ENCODE measurements at regions of chr6 and their contacts with region 1.

Region 1: DNA sequence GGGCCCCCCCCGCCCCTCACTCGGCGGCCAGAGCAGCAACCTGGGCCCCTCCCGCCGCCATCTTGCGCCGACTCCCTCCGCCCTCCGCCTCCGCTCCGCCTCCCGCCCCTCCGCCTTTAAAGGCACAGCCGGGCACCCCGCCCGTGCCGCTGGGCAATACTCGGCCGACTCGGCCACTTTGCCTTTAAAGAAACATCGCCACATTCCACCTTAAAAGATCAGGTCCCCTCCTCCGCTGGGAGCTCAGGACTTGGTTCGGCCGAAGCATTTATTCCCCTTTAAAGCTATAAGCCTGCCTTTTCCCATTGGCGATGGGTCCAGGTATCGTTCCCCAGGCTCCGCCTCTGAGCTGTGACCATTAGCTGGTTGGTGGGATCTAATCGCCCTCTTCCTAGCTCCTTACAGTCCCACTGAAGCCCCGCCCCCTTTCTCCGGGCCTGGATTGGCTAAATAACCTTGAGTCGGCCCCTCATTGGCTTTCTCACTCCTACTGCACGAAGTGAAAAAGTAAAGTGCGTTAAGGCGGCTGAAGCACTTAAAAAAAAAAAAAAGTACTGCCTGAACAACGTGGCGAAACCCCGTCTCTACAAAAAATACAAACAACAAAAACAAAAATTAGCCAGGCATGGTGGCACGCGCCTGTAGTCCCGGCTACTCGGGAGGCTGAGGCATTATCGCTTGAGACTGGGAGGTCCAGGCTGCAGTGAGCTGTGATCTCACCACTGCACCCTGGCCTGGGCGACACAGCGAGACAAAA is at the start of gene ZBTB22:
- DNase-seq: peak; percentile 95
- H3K4me3 Mint-ChIP-seq: peak within 1 kb of the TSS; percentile 99
- H3K27ac Mint-ChIP-seq: peak within 1 kb of the TSS; percentile 97
- H3K4me1 Mint-ChIP-seq: peaks cover 52% of the 10 kb centered on the region
- H3K27me3 Mint-ChIP-seq: no peaks in the 10 kb centered on the region
- total RNA-seq, gene ZBTB22: 10.9 and 14.4 TPM in 2 replicates

Region 2: DNA sequence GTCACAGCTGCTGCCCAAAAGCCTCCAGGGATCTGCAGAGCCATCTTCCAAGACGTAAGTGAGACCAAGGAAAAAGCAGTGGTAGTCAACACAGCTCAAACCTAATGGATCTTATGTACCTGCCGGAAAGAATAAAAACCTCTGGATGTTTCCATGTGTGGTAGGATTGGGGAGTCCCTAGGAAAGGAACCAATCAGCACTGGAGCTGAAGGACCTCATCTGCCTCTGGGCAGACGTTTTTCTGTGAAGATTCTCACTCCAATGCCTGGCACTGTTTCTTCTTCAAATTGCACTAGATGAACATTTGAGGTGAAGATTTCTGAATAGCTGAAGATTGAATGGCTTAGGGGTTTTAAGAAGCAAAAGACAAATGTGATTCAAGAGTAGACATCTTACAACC is 554.4 kb before region 1 on chr6 and contains the start of gene HLA-DQB2:
- intact Hi-C with region 1: no loop called
- DNase-seq: no peak
- H3K4me3 Mint-ChIP-seq: no peak within 1 kb of the TSS
- H3K27ac Mint-ChIP-seq: no peak within 1 kb of the TSS
- H3K4me1 Mint-ChIP-seq: no peaks in the 10 kb centered on the region
- H3K27me3 Mint-ChIP-seq: peaks cover 45% of the 10 kb centered on the region
- total RNA-seq, gene HLA-DQB2: 0.25 and 0.30 TPM in 2 replicates

Region 3: DNA sequence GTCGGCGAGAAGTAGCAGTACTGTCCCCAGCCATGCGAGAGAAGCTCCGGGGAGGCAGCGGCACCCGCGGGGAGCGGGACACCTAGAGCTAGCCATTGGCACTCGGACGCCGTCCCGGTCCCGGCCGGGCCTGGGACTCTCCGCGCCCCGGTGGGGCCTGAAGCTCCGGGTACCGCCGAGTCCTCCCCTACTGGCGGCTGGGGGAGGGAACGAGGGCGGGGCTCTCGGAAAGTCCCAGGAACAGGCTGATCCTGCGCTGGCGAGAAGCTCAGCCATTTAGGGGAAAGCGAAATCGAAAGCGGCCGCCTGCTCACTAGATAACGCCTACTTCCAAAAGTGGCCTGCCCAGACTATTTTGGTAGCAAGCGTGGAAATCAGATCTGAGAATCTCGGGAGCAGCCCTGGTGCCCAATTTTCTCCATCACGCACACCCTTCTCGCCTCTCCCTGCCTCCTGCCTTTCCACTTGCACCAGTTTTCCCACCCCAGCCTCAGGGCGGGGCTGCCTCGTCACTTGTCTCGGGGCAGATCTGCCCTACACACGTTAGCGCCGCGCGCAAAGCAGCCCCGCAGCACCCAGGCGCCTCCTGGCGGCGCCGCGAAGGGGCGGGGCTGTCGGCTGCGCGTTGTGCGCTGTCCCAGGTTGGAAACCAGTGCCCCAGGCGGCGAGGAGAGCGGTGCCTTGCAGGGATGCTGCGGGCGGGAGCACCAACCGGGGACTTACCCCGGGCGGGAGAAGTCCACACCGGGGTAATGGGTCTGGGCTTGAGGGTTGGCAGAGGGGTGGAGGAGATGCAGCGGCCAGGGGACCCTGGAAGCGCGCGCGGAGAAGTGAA is 464.1 kb before region 1 on chr6 and contains the starts of genes PSMB9 and TAP1:
- intact Hi-C with region 1: loop called (anchors 10 kb)
- DNase-seq: peak; percentile 93
- H3K4me3 Mint-ChIP-seq: peak within 1 kb of the TSS; percentile 99
- H3K27ac Mint-ChIP-seq: peak within 1 kb of the TSS; percentile 97
- H3K4me1 Mint-ChIP-seq: peaks cover 63% of the 10 kb centered on the region
- H3K27me3 Mint-ChIP-seq: no peaks in the 10 kb centered on the region
- total RNA-seq, gene PSMB9: 262 and 265 TPM in 2 replicates
- total RNA-seq, gene TAP1: 276 and 278 TPM in 2 replicates

Region 4: GRCh38 chr6:33248925-33249731 is 68.7 kb before region 1 on chr6:
- intact Hi-C with region 1: loop called (anchors 2 kb)
- DNase-seq: peak; percentile 97
- H3K4me3 Mint-ChIP-seq: peak overlapping the region; percentile 88
- H3K27ac Mint-ChIP-seq: peak overlapping the region; percentile 92
- H3K4me1 Mint-ChIP-seq: peaks cover 32% of the 10 kb centered on the region
- H3K27me3 Mint-ChIP-seq: no peaks in the 10 kb centered on the region

Region 5: GRCh38 chr6:33276864-33277662 is 40.8 kb before region 1 on chr6 and contains the start of gene B3GALT4:
- intact Hi-C with region 1: loop called (anchors 1 kb)
- DNase-seq: peak; percentile 73
- H3K4me3 Mint-ChIP-seq: peak within 1 kb of the TSS; percentile 98
- H3K27ac Mint-ChIP-seq: peak within 1 kb of the TSS; percentile 89
- H3K4me1 Mint-ChIP-seq: peaks cover 35% of the 10 kb centered on the region
- H3K27me3 Mint-ChIP-seq: no peaks in the 10 kb centered on the region
- total RNA-seq, gene B3GALT4: 5.1 and 6.5 TPM in 2 replicates

Region 6: GRCh38 chr6:33344701-33345697 is 27.2 kb after region 1 on chr6:
- intact Hi-C with region 1: loop called (anchors 5 kb)
- DNase-seq: peak; percentile 62
- H3K4me3 Mint-ChIP-seq: peak overlapping the region; percentile 69
- H3K27ac Mint-ChIP-seq: peak overlapping the region; percentile 82
- H3K4me1 Mint-ChIP-seq: peaks cover 24% of the 10 kb centered on the region
- H3K27me3 Mint-ChIP-seq: peaks cover 2% of the 10 kb centered on the region

Region 7: DNA sequence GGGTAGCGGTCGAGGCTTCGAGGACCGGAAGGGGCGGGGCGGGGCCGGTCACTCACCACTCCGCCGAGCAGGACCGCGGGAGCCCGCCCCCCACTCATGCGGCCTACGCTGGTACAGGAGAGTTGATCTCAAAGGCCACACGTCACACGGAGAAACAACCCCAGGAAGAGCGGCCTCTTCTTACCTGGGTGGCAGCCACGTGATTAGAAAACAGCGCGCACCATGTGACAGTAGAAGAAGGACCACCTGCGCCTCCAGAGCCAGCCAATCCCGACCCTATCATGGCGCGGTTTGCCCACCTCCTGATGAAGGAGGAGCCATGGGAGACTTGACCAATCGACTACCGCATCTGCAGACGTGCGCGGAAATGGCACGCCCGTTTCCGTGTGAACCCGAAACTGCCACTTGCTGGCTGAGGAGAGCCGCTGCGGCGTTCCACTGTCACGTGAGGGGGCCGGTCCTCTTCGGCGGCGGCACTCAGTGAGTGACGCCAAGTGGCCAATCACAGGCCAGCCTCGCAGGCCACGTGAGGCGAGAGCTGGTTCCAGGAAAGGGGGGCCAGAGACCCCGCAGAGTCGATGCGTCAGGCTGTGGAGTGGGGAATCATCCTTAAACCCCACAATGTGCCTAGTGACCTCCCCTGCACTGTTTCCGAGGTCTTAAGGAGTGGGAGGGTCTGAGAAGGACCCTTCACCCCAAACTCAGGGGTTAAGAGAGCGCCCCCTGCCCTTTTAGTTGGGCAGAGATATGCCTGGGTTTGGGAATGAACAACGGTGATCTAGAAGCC is 100.2 kb after region 1 on chr6 and contains the start of gene CUTA:
- intact Hi-C with region 1: loop called (anchors 2 kb)
- DNase-seq: peak; percentile 99
- H3K4me3 Mint-ChIP-seq: peak within 1 kb of the TSS; percentile 96
- H3K27ac Mint-ChIP-seq: peak within 1 kb of the TSS; percentile 100
- H3K4me1 Mint-ChIP-seq: peaks cover 57% of the 10 kb centered on the region
- H3K27me3 Mint-ChIP-seq: no peaks in the 10 kb centered on the region
- total RNA-seq, gene CUTA: 143 and 146 TPM in 2 replicates